ENCODE measurements at regions of chrX and their contacts with region 1.

Region 1: GRCh38 chrX:21985332-21985777 is 44.8 kb downstream of the SMS start:
- DNase-seq: peak; percentile 36
- H3K4me3 Mint-ChIP-seq: no peak overlapping the region
- H3K27ac Mint-ChIP-seq: no peak overlapping the region
- H3K4me1 Mint-ChIP-seq: peaks cover 20% of the 10 kb centered on the region
- H3K27me3 Mint-ChIP-seq: no peaks in the 10 kb centered on the region

Region 2: GRCh38 chrX:22025751-22026150 is 40.4 kb after region 1 on chrX:
- intact Hi-C with region 1: loop called (anchors 2 kb)
- DNase-seq: no peak
- H3K4me3 Mint-ChIP-seq: no peak overlapping the region
- H3K27ac Mint-ChIP-seq: no peak overlapping the region
- H3K4me1 Mint-ChIP-seq: peaks cover 11% of the 10 kb centered on the region
- H3K27me3 Mint-ChIP-seq: no peaks in the 10 kb centered on the region

Region 3: GRCh38 chrX:22069586-22069985 is 84.2 kb after region 1 on chrX:
- intact Hi-C with region 1: no loop called
- DNase-seq: no peak
- H3K4me3 Mint-ChIP-seq: no peak overlapping the region
- H3K27ac Mint-ChIP-seq: no peak overlapping the region
- H3K4me1 Mint-ChIP-seq: peaks cover 6% of the 10 kb centered on the region
- H3K27me3 Mint-ChIP-seq: no peaks in the 10 kb centered on the region

Region 4: DNA sequence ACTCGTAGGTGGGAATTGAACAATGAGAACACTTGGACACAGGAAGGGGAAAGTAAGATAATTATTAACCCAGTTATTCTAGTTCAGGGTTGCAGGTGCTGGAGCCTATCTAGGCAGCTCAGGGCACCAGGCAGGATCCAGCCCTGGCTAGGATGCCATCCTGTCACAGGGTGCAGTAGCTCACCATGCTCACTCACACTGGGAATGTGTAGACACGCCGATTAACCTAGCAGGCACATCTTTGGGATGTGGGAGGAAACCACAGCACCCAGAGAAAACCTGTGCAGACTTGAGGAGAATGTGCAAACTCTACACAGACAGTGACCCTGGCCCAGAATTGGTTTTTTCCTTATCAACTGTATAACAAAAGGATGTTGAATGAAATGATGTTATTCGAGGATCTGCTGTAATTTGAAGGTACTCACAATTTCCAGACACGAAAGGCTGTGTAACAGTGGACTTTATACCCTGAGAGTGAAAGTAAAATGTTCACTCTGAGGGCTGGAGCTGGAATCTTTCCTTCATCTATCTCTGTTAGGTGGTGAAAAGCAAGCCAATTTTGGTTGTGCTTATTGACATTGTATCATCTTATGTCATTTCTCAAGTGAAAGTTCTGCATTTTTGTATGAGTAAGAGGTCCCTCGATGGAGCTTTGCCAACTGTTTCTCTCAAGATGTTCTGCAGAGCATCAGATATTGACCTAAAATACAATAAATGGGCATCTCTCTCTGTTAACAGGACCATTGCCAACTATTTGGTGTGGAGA is 125.6 kb after region 1 on chrX:
- intact Hi-C with region 1: loop called (anchors 1 kb)
- DNase-seq: no peak
- H3K4me3 Mint-ChIP-seq: no peak overlapping the region
- H3K27ac Mint-ChIP-seq: no peak overlapping the region
- H3K4me1 Mint-ChIP-seq: no peaks in the 10 kb centered on the region
- H3K27me3 Mint-ChIP-seq: peaks cover 4% of the 10 kb centered on the region

Region 5: GRCh38 chrX:22135994-22136684 is 150.8 kb after region 1 on chrX:
- intact Hi-C with region 1: loop called (anchors 1 kb)
- DNase-seq: no peak
- H3K4me3 Mint-ChIP-seq: no peak overlapping the region
- H3K27ac Mint-ChIP-seq: peak overlapping the region; percentile 33
- H3K4me1 Mint-ChIP-seq: peaks cover 21% of the 10 kb centered on the region
- H3K27me3 Mint-ChIP-seq: no peaks in the 10 kb centered on the region

Region 6: GRCh38 chrX:22192417-22193060 is 207.2 kb after region 1 on chrX:
- intact Hi-C with region 1: loop called (anchors 1 kb)
- DNase-seq: peak; percentile 17
- H3K4me3 Mint-ChIP-seq: no peak overlapping the region
- H3K27ac Mint-ChIP-seq: no peak overlapping the region
- H3K4me1 Mint-ChIP-seq: peaks cover 5% of the 10 kb centered on the region
- H3K27me3 Mint-ChIP-seq: no peaks in the 10 kb centered on the region

Region 7: DNA sequence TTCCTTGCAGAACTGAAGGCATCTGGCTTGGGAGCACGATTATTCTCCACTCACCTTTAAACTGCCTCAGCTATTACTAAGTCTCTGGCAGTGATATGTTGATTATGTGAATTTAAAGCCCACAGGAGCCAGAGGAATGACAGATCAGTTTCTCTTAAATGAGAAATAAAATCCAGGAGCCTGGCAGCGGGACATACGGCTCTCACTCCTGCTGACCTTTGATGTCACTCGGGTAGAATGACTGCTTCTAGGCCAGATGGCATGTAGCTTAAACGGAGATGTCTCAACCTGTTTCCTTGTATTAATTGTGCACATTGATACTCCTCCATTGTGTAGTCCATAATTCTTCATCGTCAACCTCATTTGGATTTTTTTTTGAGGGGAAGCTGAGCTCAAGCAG is 283.4 kb after region 1 on chrX:
- intact Hi-C with region 1: loop called (anchors 10 kb)
- DNase-seq: no peak
- H3K4me3 Mint-ChIP-seq: no peak overlapping the region
- H3K27ac Mint-ChIP-seq: no peak overlapping the region
- H3K4me1 Mint-ChIP-seq: no peaks in the 10 kb centered on the region
- H3K27me3 Mint-ChIP-seq: no peaks in the 10 kb centered on the region

Region 8: GRCh38 chrX:23667239-23668177 is 1682.2 kb after region 1 on chrX and contains the start of gene PRDX4:
- intact Hi-C with region 1: loop called (anchors 10 kb)
- DNase-seq: peak; percentile 66
- H3K4me3 Mint-ChIP-seq: peak within 1 kb of the TSS; percentile 88
- H3K27ac Mint-ChIP-seq: peak within 1 kb of the TSS; percentile 94
- H3K4me1 Mint-ChIP-seq: peaks cover 37% of the 10 kb centered on the region
- H3K27me3 Mint-ChIP-seq: no peaks in the 10 kb centered on the region
- total RNA-seq, gene PRDX4: 75.5 and 83.2 TPM in 2 replicates